Activated CD4-positive, alpha-beta memory T cell treated with anti-CD3 and anti-CD28 coated beads, Interleukin-2, amount 10 ng/mL, durations not matched to agents 7 days and 5 days (primary cell): ENCODE measurements at regions of chr20 and their contacts with region 1.

Region 1: GRCh38 chr20:45812157-45813020 is at the start of gene UBE2C:
- DNase-seq: peak; percentile 97
- H3K4me3 Mint-ChIP-seq: peak within 1 kb of the TSS; percentile 99
- H3K27ac Mint-ChIP-seq: peak within 1 kb of the TSS; percentile 83
- H3K4me1 Mint-ChIP-seq: peaks cover 36% of the 10 kb centered on the region
- H3K27me3 Mint-ChIP-seq: no peaks in the 10 kb centered on the region
- total RNA-seq, gene UBE2C: 170 to 184 TPM

Region 2: DNA sequence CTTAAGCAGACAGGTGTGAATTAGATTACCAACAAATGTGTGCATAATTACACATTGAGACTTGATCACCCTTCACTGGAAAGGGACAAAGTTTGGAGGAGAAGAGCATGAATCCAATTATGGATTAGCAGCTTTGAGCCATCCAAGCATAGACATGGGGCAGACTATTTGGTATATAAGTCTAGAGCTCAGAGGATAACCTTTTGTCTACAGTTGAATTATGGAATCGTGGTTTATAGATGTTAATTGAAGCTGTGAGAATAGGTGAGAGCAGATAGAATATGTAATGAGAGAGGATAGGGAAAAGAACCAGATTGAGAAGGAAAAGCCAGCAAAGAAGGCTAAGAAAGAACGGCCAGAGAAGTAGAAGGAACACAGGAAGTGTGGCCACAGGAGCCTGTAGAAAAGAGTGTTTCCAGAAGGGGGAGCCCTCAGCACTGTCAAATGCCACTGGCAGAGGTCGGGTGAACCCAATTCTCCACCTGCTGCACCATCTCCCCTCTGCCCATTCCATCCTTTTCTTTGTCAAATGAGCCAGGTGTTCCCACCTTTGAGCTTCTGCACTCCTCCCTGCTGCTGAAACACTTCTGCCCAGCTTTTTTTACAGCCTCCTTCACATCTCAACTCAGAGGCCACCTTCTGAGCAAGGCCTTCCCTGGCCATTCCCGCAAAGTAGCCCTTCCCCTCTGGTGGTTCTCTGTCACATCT is 13.3 kb before region 1 on chr20:
- CTCF ChIA-PET with region 1: interaction called, 19 read pairs
- POLR2A ChIA-PET with region 1: interaction called, 10 read pairs
- DNase-seq: peak; percentile 74
- H3K4me3 Mint-ChIP-seq: no peak overlapping the region
- H3K27ac Mint-ChIP-seq: peak overlapping the region; percentile 33
- H3K4me1 Mint-ChIP-seq: peaks cover 22% of the 10 kb centered on the region
- H3K27me3 Mint-ChIP-seq: no peaks in the 10 kb centered on the region

Region 3: GRCh38 chr20:45823949-45824835 is 11.8 kb after region 1 on chr20:
- CTCF ChIA-PET with region 1: interaction called, 11 read pairs
- POLR2A ChIA-PET with region 1: interaction called, 30 read pairs
- DNase-seq: peak; percentile 59
- H3K4me3 Mint-ChIP-seq: peak overlapping the region; percentile 66
- H3K27ac Mint-ChIP-seq: no peak overlapping the region
- H3K4me1 Mint-ChIP-seq: peaks cover 16% of the 10 kb centered on the region
- H3K27me3 Mint-ChIP-seq: peaks cover 30% of the 10 kb centered on the region

Region 4: DNA sequence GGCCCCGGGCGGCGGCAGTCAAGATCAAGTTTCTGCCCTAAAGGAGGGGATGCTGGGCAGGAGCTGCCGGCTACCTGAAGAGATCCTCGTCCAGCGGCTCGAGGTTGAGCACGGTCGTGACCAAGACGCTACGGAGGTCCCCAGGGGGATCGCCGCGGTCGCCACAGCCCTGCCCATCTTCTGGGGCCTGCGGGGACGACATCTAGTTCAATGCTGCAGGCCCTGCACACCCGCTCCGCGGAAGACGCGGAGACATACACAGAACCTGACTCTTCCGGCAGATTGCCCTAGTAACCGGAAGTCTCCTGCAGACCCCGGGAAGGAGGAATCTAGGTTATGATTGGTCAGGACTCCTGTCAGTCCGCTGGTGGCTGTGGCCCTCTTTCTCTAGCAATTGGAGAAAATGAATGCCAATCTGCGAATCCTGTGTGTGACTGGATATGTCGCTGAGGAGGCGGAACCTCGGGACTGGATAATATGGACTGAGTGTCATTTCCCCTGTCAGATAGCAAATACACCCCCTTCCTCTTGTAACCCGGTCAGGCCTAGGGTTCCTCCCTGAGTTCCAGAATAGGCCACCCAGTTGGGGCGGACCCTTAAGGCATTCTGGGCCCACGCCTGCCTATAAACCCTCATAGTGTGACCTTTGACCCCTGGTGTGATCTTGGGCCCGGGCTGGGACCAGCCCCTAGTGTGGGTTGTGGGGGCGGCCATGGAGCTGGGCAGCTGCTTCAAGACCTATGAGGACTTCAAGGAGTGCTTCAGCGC is 44.9 kb after region 1 on chr20 and contains the starts of genes ACOT8 and ZSWIM3:
- CTCF ChIA-PET with region 1: no interaction called
- POLR2A ChIA-PET with region 1: interaction called, 13 read pairs
- DNase-seq: peak; percentile 96
- H3K4me3 Mint-ChIP-seq: peak within 1 kb of the TSS; percentile 98
- H3K27ac Mint-ChIP-seq: peak within 1 kb of the TSS; percentile 99
- H3K4me1 Mint-ChIP-seq: peaks cover 55% of the 10 kb centered on the region
- H3K27me3 Mint-ChIP-seq: no peaks in the 10 kb centered on the region
- total RNA-seq, gene ACOT8: 36.0 to 36.5 TPM
- total RNA-seq, gene ZSWIM3: 5.5 to 5.7 TPM